ENCODE measurements at regions of chr16 and their contacts with region 1.

Region 1: DNA sequence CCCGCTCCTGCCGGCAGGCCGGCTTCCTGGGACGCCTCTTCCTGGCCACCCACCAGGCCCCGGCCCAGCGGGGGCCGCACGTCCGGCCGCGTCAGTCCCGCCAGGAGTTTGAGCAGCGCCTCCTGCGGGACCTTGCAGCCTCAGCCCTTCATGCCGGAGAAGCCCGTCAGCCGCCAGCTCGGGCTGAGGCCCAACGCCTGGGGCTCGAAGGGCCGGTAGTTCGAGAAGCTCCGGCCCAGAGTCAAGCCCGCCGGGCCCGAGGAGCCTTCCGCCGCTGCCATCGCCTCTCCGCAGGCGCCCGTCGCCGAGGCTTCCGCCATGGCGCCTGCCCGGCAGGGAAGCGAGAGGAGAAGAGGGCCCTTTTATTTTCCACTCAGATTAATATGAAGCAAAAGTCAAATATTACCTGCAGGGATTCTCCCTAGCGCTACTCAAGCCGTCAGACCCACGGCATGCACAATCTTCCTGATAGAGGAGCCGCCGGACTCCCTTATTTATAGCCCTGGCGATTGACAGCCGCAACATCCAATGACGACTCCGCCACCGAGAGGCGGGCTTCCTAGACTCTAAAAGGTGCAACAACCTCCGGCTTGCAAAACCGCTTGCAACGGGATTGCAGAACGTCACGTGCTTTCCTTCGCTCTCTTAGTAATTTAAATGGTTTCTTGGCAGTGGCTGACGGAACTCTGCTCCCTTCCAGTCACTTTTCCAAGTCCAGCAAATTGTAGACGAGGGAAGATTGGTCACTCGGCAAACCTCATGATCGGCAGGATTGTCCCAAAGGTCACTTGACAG is at the start of gene SEPHS2:
- DNase-seq: peak; percentile 97 to 99
- H3K4me3 ChIP-seq: peak within 1 kb of the TSS; percentile 73
- H3K27ac ChIP-seq: peak within 1 kb of the TSS; percentile 62
- H3K4me1 ChIP-seq: peaks cover 26% of the 10 kb centered on the region
- H3K27me3 ChIP-seq: no peaks in the 10 kb centered on the region
- CTCF ChIP-seq: peak; percentile 55; the same call in 1 of the 2 replicates
- total RNA-seq, gene SEPHS2: 66.8 and 67.2 TPM in 2 replicates

Region 2: DNA sequence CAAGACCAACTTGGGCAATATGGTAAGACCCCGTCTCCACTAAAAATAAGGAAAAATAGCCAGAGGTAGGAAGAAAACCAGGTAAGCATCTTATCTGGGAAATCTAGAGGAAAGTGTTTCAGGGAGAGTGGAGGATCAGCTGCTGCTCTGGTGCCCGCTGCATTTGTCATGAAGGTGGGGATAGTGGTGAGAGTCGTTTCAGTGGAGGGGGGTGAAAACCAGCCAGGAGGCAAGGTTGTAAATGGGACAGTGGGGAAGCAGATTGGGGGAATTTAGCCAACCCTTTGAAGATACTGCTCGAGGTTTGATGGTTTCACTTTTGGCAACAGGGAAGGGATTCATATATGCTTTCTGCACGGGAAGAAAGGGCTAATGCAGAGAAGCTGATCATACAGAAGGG is 24.6 kb before region 1 on chr16:
- CTCF ChIA-PET with region 1: no interaction called
- POLR2A ChIA-PET with region 1: no interaction called
- intact Hi-C with region 1: no loop called
- DNase-seq: no peak
- H3K4me3 ChIP-seq: no peak overlapping the region
- H3K27ac ChIP-seq: no peak overlapping the region
- H3K4me1 ChIP-seq: peaks cover 7% of the 10 kb centered on the region; the same call in 1 of the 2 replicates
- H3K27me3 ChIP-seq: no peaks in the 10 kb centered on the region
- CTCF ChIP-seq: no peak

Region 3: GRCh38 chr16:30526823-30527635 is 81.4 kb after region 1 on chr16:
- CTCF ChIA-PET with region 1: interaction called, 3 read pairs
- POLR2A ChIA-PET with region 1: interaction called, 5 read pairs
- intact Hi-C with region 1: loop called (anchors 1 kb)
- DNase-seq: peak; percentile 94 to 100
- H3K4me3 ChIP-seq: peak overlapping the region; percentile 97
- H3K27ac ChIP-seq: peak overlapping the region; percentile 79
- H3K4me1 ChIP-seq: peaks cover 32% of the 10 kb centered on the region
- H3K27me3 ChIP-seq: no peaks in the 10 kb centered on the region
- CTCF ChIP-seq: peak; percentile 50; the same call in 1 of the 2 replicates

Region 4: GRCh38 chr16:30534368-30535105 is 88.9 kb after region 1 on chr16 and contains the start of gene ZNF747:
- CTCF ChIA-PET with region 1: interaction called, 7 read pairs
- POLR2A ChIA-PET with region 1: no interaction called
- intact Hi-C with region 1: loop called (anchors 1 kb)
- DNase-seq: peak; percentile 72 to 92
- H3K4me3 ChIP-seq: peak within 1 kb of the TSS; percentile 73
- H3K27ac ChIP-seq: peak within 1 kb of the TSS; percentile 57
- H3K4me1 ChIP-seq: peaks cover 30% of the 10 kb centered on the region
- H3K27me3 ChIP-seq: no peaks in the 10 kb centered on the region
- CTCF ChIP-seq: peak; percentile 29; the same call in 1 of the 2 replicates
- total RNA-seq, gene ZNF747: 14.5 and 17.9 TPM in 2 replicates

Region 5: DNA sequence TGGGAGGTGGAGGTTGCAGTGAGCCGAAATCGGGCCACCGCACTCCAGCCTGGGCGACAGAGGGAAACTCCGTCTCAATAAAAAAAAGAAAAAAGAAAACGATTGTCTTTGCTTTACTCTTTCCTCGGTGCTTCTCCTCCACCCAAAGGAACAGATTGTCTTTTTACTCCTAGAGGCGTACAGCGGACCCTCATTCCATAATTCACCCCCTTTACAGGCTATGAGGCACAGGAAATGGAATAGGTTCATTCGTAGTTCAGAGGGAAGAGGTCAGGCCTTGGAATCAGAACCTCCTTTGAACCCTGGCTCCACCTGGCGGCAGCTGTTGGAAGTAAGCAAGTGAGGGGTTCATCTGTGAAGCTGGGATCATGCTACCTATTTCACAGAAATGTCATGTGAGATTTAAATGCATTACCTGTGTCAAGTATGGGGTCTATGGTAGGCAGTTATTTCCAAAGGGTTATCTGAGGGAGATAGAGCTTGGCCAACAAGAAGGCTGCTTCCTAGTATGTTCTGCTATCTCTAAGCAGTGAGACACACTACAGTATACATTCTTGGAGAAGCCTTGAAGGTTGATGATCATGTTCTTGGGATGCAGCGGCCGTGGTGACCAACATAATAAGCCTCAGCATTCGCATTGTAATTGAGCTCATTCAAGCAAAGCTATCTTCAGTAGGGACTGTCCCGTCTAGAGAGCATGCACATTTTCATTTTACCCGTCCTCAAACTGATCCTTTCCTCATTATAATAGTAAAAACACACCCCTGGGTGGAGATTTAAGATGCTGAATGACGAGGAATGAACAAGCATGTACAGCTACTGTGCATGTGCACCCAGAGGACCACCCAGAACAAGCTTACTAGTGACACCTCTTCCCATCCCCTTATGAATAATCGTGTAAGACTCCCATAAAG is 183.3 kb after region 1 on chr16:
- CTCF ChIA-PET with region 1: no interaction called
- POLR2A ChIA-PET with region 1: no interaction called
- intact Hi-C with region 1: loop called (anchors 1 kb)
- DNase-seq: peak; percentile 60 to 89
- H3K4me3 ChIP-seq: peak overlapping the region; percentile 33; the same call in 1 of the 2 replicates
- H3K27ac ChIP-seq: no peak overlapping the region
- H3K4me1 ChIP-seq: peaks cover 10% of the 10 kb centered on the region; the same call in 1 of the 2 replicates
- H3K27me3 ChIP-seq: no peaks in the 10 kb centered on the region
- CTCF ChIP-seq: peak; percentile 96

Region 6: DNA sequence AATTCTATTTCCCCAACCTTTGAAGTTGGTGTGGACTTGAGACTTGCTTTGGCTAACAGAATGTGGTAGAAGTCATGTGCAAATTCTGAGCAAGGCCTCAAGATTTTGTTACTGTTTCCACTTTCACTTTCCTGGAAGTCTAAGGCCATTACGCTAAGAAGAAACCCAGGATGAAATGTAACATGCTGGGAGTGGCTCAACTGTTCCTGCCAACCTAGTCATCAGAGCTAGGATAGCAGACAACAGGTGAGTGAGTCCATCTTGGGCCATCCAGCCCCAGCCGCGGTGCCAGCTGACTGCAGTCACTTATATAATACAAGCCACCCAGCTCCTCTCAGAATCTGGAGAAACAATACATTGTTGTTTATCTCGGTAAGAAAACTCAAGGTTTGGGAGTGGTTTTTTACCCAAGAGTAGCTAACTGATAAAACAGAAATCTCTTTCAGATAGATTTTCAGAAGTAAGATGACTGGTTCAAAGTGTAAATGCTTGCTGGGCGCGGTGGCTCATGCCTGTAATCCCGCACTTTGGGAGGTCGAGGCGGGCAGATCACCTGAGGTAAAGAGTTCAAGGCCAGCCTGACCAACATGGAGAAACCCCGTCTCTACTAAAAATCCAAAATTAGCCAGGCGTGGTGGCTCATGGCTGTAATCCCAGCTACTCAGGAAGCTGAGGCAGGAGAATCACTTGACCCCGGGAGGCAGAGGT is 577.1 kb after region 1 on chr16:
- CTCF ChIA-PET with region 1: no interaction called
- POLR2A ChIA-PET with region 1: interaction called, 11 read pairs
- intact Hi-C with region 1: no loop called
- DNase-seq: no peak
- H3K4me3 ChIP-seq: no peak overlapping the region
- H3K27ac ChIP-seq: no peak overlapping the region
- H3K4me1 ChIP-seq: no peaks in the 10 kb centered on the region
- H3K27me3 ChIP-seq: no peaks in the 10 kb centered on the region
- CTCF ChIP-seq: no peak

Measured in PC-9 (cell line).